Activated CD8-positive, alpha-beta T cell treated with anti-CD3 and anti-CD28 coated beads for 36 hours (primary cell): ENCODE measurements at regions of chr1 and their contacts with region 1.

Region 1: DNA sequence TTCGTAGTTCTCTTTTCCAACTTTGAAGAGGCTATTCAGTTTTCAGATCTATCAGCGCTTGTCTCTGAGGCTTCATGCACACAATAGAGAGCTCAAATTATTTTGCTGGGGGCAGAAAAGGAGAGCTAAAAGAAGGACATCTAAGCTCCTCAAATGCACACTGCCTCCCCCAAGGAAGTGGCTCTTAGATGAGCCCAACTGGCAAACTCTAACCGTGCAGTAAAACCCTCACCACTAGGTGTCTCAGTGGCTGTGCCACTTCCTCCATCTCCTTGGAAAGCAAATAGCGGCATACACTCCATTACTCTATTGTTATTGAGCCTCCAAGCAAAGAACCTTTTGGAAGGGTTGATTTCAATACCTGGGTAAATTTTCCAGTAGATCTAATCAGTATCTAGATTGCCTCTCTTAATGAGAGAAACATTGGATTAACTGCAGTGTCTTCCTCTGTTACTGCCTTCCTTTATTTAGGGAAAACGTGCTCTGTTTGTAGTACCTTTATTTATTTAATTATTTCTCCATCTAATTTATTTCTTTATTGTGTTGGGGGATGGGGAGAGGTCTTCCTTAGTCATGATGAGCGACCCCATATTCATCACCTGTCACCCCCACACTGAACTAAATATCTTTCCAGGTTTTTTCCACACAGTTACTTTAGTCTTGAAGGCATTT is 9.2 kb upstream of the SFPQ start:
- DNase-seq: peak; percentile 82
- ATAC-seq: peak; percentile 100
- H3K4me3 Mint-ChIP-seq: no peak overlapping the region
- H3K27ac Mint-ChIP-seq: no peak overlapping the region
- H3K4me1 Mint-ChIP-seq: peaks cover 6% of the 10 kb centered on the region
- H3K27me3 Mint-ChIP-seq: no peaks in the 10 kb centered on the region
- CTCF ChIP-seq: peak; percentile 87

Region 2: DNA sequence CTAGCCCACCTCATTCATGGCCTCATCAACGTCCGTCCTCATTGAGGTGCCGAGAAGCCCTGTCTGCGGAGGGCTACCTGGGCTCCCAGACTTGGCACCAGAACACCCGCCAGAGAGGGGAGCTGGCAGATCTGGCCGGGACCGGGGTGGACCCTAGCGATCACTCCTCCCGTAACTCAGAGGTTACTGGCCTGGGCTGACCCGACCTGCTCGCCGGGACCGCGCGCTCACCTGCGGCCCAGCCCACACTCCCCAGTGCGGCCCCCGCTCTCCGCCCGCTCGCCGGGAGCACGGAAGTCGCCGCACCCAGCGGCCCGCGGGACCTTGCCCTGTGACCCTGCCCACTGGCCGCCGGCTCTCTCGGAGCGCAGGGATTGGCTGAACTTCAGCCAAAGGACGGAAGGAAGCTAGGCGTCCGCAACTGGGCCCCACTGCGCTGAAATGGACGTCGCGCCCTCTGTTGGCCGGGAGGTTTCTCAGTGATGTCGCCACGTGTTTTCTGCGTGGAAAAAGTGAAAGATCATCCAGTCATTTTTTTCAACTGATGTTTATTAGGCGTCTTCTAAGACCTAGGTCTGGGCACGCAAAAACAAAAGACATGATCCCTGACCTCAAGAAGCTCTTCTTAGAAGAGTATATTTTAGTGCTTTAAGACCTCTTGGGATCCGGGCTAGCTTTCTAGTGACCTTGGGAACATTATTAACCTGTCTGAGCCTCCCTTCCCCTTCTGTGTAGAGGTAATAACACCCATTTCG is 342.6 kb before region 1 on chr1 and contains the start of gene SMIM12:
- CTCF ChIA-PET with region 1: no interaction called
- POLR2A ChIA-PET with region 1: no interaction called
- intact Hi-C with region 1: no loop called
- DNase-seq: peak; percentile 96
- ATAC-seq: peak; percentile 93
- H3K4me3 Mint-ChIP-seq: peak within 1 kb of the TSS; percentile 94
- H3K27ac Mint-ChIP-seq: peak within 1 kb of the TSS; percentile 98
- H3K4me1 Mint-ChIP-seq: peaks cover 61% of the 10 kb centered on the region
- H3K27me3 Mint-ChIP-seq: no peaks in the 10 kb centered on the region
- CTCF ChIP-seq: peak; percentile 70
- total RNA-seq, gene SMIM12: 36.6 to 37.5 TPM

Region 3: DNA sequence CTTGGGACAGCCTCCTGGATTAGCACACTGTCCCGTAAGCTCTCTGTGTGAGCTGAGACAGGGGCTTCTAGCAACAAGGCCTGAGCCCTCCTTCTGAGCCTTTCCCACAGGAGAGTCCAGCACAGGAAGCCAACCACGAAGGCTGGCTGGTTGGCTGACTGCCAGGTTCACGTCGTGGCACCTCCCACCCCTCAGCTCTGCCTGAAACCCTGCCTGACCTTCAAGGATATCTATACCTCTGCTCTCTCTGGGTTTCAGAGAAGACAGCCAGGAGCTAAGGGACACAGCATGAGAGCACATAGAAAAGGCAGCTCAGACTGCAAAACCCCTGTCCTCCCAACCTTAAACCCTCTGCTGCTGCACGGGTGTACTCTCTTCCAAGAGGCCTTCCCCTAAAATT is 286.7 kb before region 1 on chr1:
- CTCF ChIA-PET with region 1: no interaction called
- POLR2A ChIA-PET with region 1: no interaction called
- intact Hi-C with region 1: no loop called
- DNase-seq: no peak
- ATAC-seq: no peak
- H3K4me3 Mint-ChIP-seq: no peak overlapping the region
- H3K27ac Mint-ChIP-seq: no peak overlapping the region
- H3K4me1 Mint-ChIP-seq: no peaks in the 10 kb centered on the region
- H3K27me3 Mint-ChIP-seq: peaks cover 3% of the 10 kb centered on the region
- CTCF ChIP-seq: no peak

Region 4: GRCh38 chr1:35268282-35269200 is 66.4 kb after region 1 on chr1 and contains the start of gene ZMYM4:
- CTCF ChIA-PET with region 1: interaction called, 7 read pairs
- POLR2A ChIA-PET with region 1: no interaction called
- intact Hi-C with region 1: loop called (anchors 10 kb)
- DNase-seq: peak; percentile 94
- ATAC-seq: peak; percentile 98
- H3K4me3 Mint-ChIP-seq: peak within 1 kb of the TSS; percentile 83
- H3K27ac Mint-ChIP-seq: peak within 1 kb of the TSS; percentile 94
- H3K4me1 Mint-ChIP-seq: peaks cover 39% of the 10 kb centered on the region
- H3K27me3 Mint-ChIP-seq: peaks cover 5% of the 10 kb centered on the region
- CTCF ChIP-seq: no peak
- total RNA-seq, gene ZMYM4: 26.0 to 31.6 TPM

Region 5: GRCh38 chr1:35298464-35298863 is 96.3 kb after region 1 on chr1:
- CTCF ChIA-PET with region 1: interaction called, 16 read pairs
- POLR2A ChIA-PET with region 1: interaction called, 3 read pairs
- intact Hi-C with region 1: loop called (anchors 5 kb)
- DNase-seq: peak; percentile 28
- ATAC-seq: peak; percentile 67
- H3K4me3 Mint-ChIP-seq: no peak overlapping the region
- H3K27ac Mint-ChIP-seq: no peak overlapping the region
- H3K4me1 Mint-ChIP-seq: peaks cover 5% of the 10 kb centered on the region
- H3K27me3 Mint-ChIP-seq: no peaks in the 10 kb centered on the region
- CTCF ChIP-seq: peak; percentile 38